ENCODE measurements at regions of chr10 and their contacts with region 1.

Region 1: DNA sequence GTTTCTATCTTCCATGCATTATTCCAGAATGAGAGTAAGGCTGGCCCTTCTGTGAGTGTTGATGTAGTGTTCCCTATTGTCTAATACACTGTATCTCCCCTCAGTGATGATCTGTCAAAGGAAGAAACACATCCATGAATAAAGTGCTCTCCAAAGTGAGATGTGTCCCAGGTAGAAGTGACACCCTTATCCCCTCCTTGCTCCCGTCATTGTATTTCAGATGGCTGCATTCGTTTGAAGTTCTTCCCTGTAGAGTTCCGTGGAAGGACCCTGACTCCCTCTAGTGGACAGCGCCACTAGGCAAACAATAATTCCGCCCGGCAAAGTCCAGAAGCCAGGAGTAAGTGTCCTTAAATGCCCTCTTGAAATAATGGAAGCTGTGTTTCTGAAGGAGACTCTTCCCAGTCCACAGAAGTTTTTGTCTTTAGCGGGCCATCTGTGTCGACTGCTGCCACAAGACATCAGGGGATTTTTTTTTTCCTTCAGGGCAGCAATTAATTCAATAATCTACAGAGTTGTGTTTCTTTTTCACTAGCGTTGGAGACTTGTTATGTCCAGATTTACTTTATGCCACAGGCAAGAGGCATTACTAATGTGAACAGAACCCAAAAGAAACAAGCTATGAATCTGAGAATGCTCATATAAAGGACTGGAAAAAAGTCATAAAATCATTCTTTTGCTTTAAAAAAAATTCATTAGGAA is 64.6 kb downstream of the THNSL1 start:
- DNase-seq: peak in 32 of 35 experiments; percentile 4 to 74 (median 34)
- ATAC-seq: peak; percentile 54 to 73 (median 62)
- H3K4me3 ChIP-seq: no peak overlapping the region
- H3K4me3 Mint-ChIP-seq: no peak overlapping the region
- H3K27ac ChIP-seq: no peak overlapping the region
- H3K27ac Mint-ChIP-seq: no peak overlapping the region
- H3K4me1 ChIP-seq: no peaks in the 10 kb centered on the region
- H3K4me1 Mint-ChIP-seq: peaks cover 0 to 6% (median 4%) of the 10 kb centered on the region in 3 donors
- H3K27me3 ChIP-seq: peaks cover 0 to 3% of the 10 kb centered on the region in 2 experiments
- H3K27me3 Mint-ChIP-seq: peaks cover 6% of the 10 kb centered on the region in 2 donors

Region 2: GRCh38 chr10:24642622-24643417 is 438.2 kb before region 1 on chr10:
- CTCF ChIA-PET with region 1: interaction called, 11 to 21 read pairs
- POLR2A ChIA-PET with region 1: no interaction called
- DNase-seq: peak in 2 of 35 experiments; percentile 28 to 75
- ATAC-seq: peak; percentile 78 to 85 (median 82)
- H3K4me3 ChIP-seq: no peak overlapping the region
- H3K4me3 Mint-ChIP-seq: no peak overlapping the region
- H3K27ac ChIP-seq: no peak overlapping the region
- H3K27ac Mint-ChIP-seq: no peak overlapping the region
- H3K4me1 ChIP-seq: peaks cover 0 to 8% of the 10 kb centered on the region in 2 experiments
- H3K4me1 Mint-ChIP-seq: peaks cover 0 to 2% (median 2%) of the 10 kb centered on the region in 3 donors
- H3K27me3 ChIP-seq: no peaks in the 10 kb centered on the region
- H3K27me3 Mint-ChIP-seq: no peaks in the 10 kb centered on the region

Measured in T-cell (primary cell).